Mammary epithelial cell (primary cell): ENCODE measurements at regions of chr3 and their contacts with region 1.

Region 1: DNA sequence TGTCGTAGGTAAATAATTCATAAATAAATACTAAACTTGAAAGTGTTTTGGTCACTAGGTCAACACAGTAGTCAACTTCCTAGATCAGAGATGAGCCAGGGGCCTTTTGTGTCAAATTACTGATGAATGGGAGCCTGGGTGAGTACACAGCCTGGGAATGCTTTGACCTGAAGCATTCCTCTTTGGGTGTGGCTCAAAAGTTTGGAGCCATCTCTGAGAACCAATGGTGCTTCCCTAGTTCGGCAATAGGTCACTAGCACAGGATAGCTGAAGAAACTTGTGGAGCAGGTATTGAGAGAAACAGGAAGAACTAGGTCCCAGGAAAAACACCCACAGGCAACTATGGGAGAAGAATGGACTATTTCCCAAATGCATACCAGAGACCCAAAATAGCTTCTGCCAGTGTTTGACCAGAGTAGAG is 56.6 kb upstream of the PLXND1 start:
- DNase-seq: peak; percentile 91
- H3K4me3 ChIP-seq: no peak overlapping the region
- H3K27ac ChIP-seq: peak overlapping the region; percentile 94
- H3K4me1 ChIP-seq: peaks cover 49% of the 10 kb centered on the region
- H3K27me3 ChIP-seq: no peaks in the 10 kb centered on the region
- CTCF ChIP-seq: no peak

Region 2: GRCh38 chr3:129690406-129690805 is 27.4 kb after region 1 on chr3:
- CTCF ChIA-PET with region 1: no interaction called
- dilution Hi-C with region 1: no loop called
- in situ Hi-C with region 1: no loop called
- intact Hi-C with region 1: loop called (anchors 1 kb)
- DNase-seq: peak; percentile 65
- H3K4me3 ChIP-seq: no peak overlapping the region
- H3K27ac ChIP-seq: no peak overlapping the region
- H3K4me1 ChIP-seq: peaks cover 21% of the 10 kb centered on the region
- H3K27me3 ChIP-seq: no peaks in the 10 kb centered on the region
- CTCF ChIP-seq: no peak

Region 3: GRCh38 chr3:129708328-129708861 is 45.4 kb after region 1 on chr3:
- CTCF ChIA-PET with region 1: no interaction called
- dilution Hi-C with region 1: no loop called
- in situ Hi-C with region 1: no loop called
- intact Hi-C with region 1: no loop called
- DNase-seq: no peak
- H3K4me3 ChIP-seq: no peak overlapping the region
- H3K27ac ChIP-seq: no peak overlapping the region
- H3K4me1 ChIP-seq: no peaks in the 10 kb centered on the region
- H3K27me3 ChIP-seq: no peaks in the 10 kb centered on the region
- CTCF ChIP-seq: no peak